HepG2 (cell line): ENCODE measurements at regions of chr22 and their contacts with region 1.

Region 1: DNA sequence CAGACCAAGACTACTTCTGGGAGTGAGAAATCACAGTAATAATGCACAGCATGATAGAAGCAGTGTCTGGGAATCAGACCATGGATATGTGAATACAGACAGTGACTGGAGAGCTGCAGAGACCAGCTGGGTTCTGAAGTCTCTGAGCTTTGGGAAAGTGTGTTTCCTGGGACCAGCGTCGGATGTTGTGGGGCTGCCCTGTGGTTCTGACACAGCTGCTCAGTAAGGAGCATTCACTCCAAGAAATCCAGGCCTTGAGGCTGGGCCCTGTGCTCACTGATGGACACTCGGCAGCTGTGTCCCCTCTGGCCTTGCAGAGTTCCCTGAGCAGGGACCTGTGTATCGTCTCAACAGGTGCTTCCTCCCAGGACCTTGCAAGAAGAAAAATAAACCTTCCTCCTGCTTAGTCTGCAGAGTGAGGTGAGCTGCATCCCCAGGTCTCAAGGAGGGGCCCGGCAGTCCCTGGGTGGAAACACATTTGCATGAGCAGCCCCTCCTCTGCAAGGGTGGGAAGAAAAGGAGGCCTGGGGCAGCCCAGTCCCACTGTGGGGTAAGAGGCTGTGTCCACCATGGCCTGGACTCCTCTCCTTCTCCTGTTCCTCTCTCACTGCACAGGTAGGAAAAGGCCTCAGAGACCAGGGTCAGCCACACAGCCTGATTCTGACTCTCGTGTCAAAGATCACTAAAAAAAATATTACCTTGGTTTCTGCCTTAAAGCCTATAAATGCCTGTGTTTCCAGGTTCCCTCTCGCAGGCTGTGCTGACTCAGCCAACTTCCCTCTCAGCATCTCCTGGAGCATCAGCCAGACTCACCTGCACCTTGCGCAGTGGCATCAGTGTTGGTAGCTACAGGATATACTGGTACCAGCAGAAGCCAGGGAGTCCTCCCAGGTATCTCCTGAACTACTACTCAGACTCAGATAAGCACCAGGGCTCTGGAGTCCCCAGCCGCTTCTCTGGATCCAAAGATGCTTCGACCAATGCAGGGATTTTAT is 108.1 kb downstream of the VPREB1 start:
- DNase-seq: no peak
- ATAC-seq: no peak
- H3K4me3 ChIP-seq: no peak overlapping the region
- H3K27ac ChIP-seq: no peak overlapping the region
- H3K4me1 ChIP-seq: no peaks in the 10 kb centered on the region
- H3K27me3 ChIP-seq: peaks cover 2 to 28% of the 10 kb centered on the region in 2 experiments; a peak in 3 of 5 replicates
- CTCF ChIP-seq: no peak
- EP300 ChIP-seq: no peak
- POLR2A ChIP-seq: no peak
- RAD21 ChIP-seq: no peak

Region 2: DNA sequence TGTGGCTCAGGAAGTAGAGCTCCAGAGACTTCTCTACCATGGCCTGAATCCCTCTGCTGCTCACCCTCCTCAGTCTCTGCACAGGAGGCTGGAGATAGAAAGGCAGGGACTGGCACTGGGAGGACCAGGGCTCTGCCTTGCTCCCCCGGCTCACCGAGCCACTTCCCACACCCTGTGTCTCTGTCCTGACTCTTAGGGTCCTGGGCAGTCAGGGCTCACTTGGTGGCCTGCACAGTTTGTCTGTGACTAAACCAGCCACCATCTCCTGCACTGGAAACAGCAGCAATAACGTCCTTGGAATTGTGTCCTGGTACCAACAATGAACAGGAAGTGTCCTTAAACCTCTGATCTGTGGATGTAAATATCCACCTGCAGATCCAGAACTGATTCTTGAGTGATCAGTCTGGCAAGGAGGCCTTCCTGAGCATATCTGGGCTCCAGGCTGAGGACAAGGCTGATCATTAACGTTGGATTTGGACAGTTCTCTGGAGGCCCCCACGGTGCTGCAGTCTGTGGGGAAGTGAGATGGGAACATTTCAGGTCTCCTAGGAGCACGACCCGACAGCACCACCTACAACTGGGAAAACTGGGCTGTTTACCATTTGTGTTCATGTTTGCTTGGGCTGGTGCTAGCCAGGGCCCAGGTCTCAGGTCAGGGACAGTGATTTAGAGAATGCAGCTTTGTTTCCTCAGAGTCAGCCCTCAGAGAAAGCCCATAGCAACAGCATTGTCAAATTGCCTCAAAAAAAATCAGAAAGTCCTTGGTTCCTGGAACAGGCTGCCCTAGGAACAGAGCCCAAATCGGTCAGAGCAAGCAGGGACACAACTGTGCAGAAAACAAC is 73.3 kb after region 1 on chr22:
- CTCF ChIA-PET with region 1: interaction called, 3 read pairs
- POLR2A ChIA-PET with region 1: no interaction called
- in situ Hi-C with region 1: loop called (anchors 5 kb)
- intact Hi-C with region 1: loop called (anchors 2 kb)
- DNase-seq: peak; percentile 63
- ATAC-seq: peak; percentile 90
- H3K4me3 ChIP-seq: peak overlapping the region; percentile 3 to 52 (median 6); a peak in 3 of 6 replicates
- H3K27ac ChIP-seq: peak overlapping the region; percentile 69
- H3K4me1 ChIP-seq: peaks cover 70% of the 10 kb centered on the region
- H3K27me3 ChIP-seq: peaks cover 0 to 10% of the 10 kb centered on the region in 2 experiments; a peak in 2 of 5 replicates
- CTCF ChIP-seq: peak; percentile 26; the same call in 1 of the 2 replicates
- EP300 ChIP-seq: peak in 1 of 2 experiments; percentile 50; a peak in 2 of 4 replicates
- POLR2A ChIP-seq: peak; percentile 19 to 26; a peak in 1 of 4 replicates
- RAD21 ChIP-seq: no peak

Region 3: GRCh38 chr22:22431271-22432220 is 78.9 kb after region 1 on chr22:
- CTCF ChIA-PET with region 1: interaction called, 3 read pairs
- POLR2A ChIA-PET with region 1: no interaction called
- in situ Hi-C with region 1: loop called (anchors 5 kb)
- intact Hi-C with region 1: loop called (anchors 2 kb)
- DNase-seq: peak; percentile 49
- ATAC-seq: peak; percentile 91
- H3K4me3 ChIP-seq: no peak overlapping the region
- H3K27ac ChIP-seq: no peak overlapping the region
- H3K4me1 ChIP-seq: peaks cover 32% of the 10 kb centered on the region
- H3K27me3 ChIP-seq: 0 out of 5 replicates have a peak, but pooled peaks cover 0 to 2% of the 10 kb centered on the region in 2 experiments
- CTCF ChIP-seq: peak; percentile 85
- EP300 ChIP-seq: no peak
- POLR2A ChIP-seq: no peak
- RAD21 ChIP-seq: no peak

Region 4: GRCh38 chr22:22604326-22605073 is 251.8 kb after region 1 on chr22:
- CTCF ChIA-PET with region 1: no interaction called
- POLR2A ChIA-PET with region 1: no interaction called
- in situ Hi-C with region 1: no loop called
- intact Hi-C with region 1: no loop called
- DNase-seq: no peak
- ATAC-seq: no peak
- H3K4me3 ChIP-seq: no peak overlapping the region
- H3K27ac ChIP-seq: no peak overlapping the region
- H3K4me1 ChIP-seq: no peaks in the 10 kb centered on the region
- H3K27me3 ChIP-seq: peaks cover 0 to 11% of the 10 kb centered on the region in 2 experiments; a peak in 1 of 5 replicates
- CTCF ChIP-seq: no peak
- EP300 ChIP-seq: no peak
- POLR2A ChIP-seq: no peak
- RAD21 ChIP-seq: no peak